Natural killer cell (primary cell): ENCODE measurements at regions of chr17 and their contacts with region 1.

Region 1: DNA sequence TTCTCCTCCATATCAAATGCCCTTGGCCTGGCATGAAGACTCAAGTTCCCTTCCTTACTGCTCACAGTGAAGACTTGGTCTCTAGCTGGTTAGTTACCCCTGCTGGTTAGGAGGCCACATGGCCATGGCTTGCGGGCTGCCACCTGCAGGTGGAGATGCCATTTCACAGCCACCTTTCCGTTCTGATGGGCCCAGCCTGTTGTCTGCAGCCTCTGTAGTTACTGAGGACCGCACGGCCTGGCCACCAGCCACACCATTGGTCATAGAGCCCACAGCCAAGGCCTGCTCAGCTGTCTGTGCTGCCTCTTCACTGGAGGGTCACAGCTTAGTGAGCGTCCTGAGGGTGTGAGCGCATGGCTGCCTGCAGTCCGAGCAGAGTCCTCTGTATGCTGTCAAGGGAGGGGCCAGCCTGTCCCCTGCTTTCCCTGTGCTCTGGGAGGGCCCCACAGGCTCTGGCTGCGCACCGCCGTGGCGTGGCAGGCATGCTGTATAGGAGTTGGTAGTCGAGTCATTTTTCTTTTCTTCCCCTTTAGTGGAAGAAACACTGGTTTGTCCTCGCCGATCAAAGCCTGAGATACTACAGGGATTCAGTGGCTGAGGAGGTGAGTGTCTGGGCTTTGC is 59.2 kb downstream of the PLD6 start:
- DNase-seq: peak in 1 of 2 donors; percentile 57
- ATAC-seq: peak; percentile 54 to 70 (median 65)
- H3K4me3 ChIP-seq: no peak overlapping the region
- H3K4me3 Mint-ChIP-seq: no peak overlapping the region
- H3K27ac ChIP-seq: no peak overlapping the region
- H3K27ac Mint-ChIP-seq: peak overlapping the region; percentile 44 to 74
- H3K4me1 ChIP-seq: peaks cover 9% of the 10 kb centered on the region
- H3K4me1 Mint-ChIP-seq: peaks cover 14 to 17% of the 10 kb centered on the region in 2 donors
- H3K27me3 ChIP-seq: no peaks in the 10 kb centered on the region
- H3K27me3 Mint-ChIP-seq: no peaks in the 10 kb centered on the region
- CTCF ChIP-seq: peak; percentile 36

Region 2: DNA sequence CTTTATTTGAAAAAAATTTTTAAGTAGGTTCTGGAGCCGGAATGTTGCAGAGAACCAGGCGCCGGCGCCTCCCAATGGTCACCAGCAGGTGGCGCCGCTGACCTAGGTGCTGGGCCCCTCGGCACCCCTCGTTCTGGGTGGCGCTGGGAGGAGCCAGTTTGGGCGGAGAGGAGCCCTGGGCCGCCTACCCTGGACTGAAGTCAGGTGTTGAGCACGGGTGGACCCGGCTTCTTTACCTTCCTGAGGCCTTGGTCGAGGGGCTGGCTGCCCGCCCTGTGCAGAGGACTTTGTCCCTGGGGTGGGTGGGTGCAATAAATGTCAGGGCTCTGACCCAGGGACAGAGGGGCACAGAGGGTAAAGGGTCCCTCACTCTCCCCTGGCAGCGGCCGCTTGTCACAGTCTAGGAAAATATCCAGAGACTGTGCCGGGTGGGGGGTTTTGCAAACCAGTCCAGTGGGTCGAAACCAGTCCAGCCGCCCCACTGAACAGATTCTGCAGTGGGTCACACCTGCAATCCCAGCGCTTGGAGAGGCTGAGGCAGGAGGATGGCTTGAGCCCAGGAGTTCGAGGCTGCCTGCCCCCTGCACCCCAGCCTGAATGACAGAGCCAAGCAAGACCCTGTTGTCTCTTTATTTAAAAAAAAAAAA is 144.9 kb before region 1 on chr17:
- intact Hi-C with region 1: loop called (anchors 2 kb)
- DNase-seq: peak; percentile 75 to 86
- ATAC-seq: peak; percentile 81 to 100 (median 99)
- H3K4me3 ChIP-seq: no peak overlapping the region
- H3K4me3 Mint-ChIP-seq: no peak overlapping the region
- H3K27ac ChIP-seq: no peak overlapping the region
- H3K27ac Mint-ChIP-seq: no peak overlapping the region
- H3K4me1 ChIP-seq: peaks cover 8% of the 10 kb centered on the region
- H3K4me1 Mint-ChIP-seq: peaks cover 0 to 5% of the 10 kb centered on the region in 2 donors
- H3K27me3 ChIP-seq: no peaks in the 10 kb centered on the region
- H3K27me3 Mint-ChIP-seq: peaks cover 0 to 2% of the 10 kb centered on the region in 2 donors
- CTCF ChIP-seq: peak; percentile 97

Region 3: GRCh38 chr17:17108451-17109049 is 38.3 kb before region 1 on chr17:
- intact Hi-C with region 1: loop called (anchors 1 kb)
- DNase-seq: no peak
- ATAC-seq: no peak
- H3K4me3 ChIP-seq: no peak overlapping the region
- H3K4me3 Mint-ChIP-seq: no peak overlapping the region
- H3K27ac ChIP-seq: peak overlapping the region; percentile 73
- H3K27ac Mint-ChIP-seq: peak overlapping the region; percentile 84 to 95
- H3K4me1 ChIP-seq: peaks cover 53% of the 10 kb centered on the region
- H3K4me1 Mint-ChIP-seq: peaks cover 47 to 76% of the 10 kb centered on the region in 2 donors
- H3K27me3 ChIP-seq: no peaks in the 10 kb centered on the region
- H3K27me3 Mint-ChIP-seq: no peaks in the 10 kb centered on the region
- CTCF ChIP-seq: no peak